ENCODE measurements at regions of chr16 and their contacts with region 1.

Region 1: GRCh38 chr16:55465077-55465896 is 13.7 kb upstream of the MMP2 start:
- DNase-seq: peak; percentile 79
- ATAC-seq: peak; percentile 97
- H3K4me3 ChIP-seq: no peak overlapping the region
- H3K27ac ChIP-seq: no peak overlapping the region
- H3K4me1 ChIP-seq: peaks cover under 1% of the 10 kb centered on the region; the same call in 1 of the 2 replicates
- H3K27me3 ChIP-seq: peaks cover 10% of the 10 kb centered on the region
- CTCF ChIP-seq: peak; percentile 100
- POLR2A ChIP-seq: peak; percentile 80
- RAD21 ChIP-seq: peak; percentile 100

Region 2: GRCh38 chr16:53892155-53892554 is 1573.1 kb before region 1 on chr16:
- CTCF ChIA-PET with region 1: no interaction called
- POLR2A ChIA-PET with region 1: no interaction called
- dilution Hi-C with region 1: no loop called
- in situ Hi-C with region 1: no loop called
- intact Hi-C with region 1: loop called (anchors 5 kb)
- DNase-seq: peak; percentile 81
- ATAC-seq: peak; percentile 78
- H3K4me3 ChIP-seq: no peak overlapping the region
- H3K27ac ChIP-seq: no peak overlapping the region
- H3K4me1 ChIP-seq: peaks cover 4% of the 10 kb centered on the region
- H3K27me3 ChIP-seq: no peaks in the 10 kb centered on the region
- CTCF ChIP-seq: peak; percentile 85
- POLR2A ChIP-seq: no peak
- RAD21 ChIP-seq: peak; percentile 83

Region 3: DNA sequence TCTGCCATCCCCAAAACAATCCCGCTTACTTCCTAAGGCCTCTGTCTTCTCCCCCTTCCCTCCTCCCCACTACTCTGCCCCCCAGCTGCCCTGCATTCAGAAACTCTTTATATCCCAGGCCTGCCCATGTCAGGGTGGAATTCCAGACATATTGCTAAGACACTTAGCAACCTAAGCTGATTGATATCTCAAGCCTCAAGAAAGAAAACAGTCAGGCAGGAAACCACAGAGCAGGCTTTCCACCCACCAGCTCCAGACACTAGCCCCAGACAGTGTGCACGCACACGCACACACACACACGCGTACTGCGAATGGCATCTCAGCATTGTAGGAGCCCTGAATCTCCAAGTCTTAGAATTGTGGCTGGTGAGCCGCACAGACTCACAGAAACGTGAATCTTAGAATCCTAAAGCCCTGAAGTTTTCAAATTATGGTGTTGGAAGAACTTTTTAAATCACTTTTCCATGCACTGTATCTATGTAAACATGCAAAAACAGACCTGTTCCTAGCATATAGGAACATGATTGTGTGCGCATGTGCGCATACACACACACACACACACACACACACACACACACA is 34.8 kb after region 1 on chr16:
- CTCF ChIA-PET with region 1: interaction called, 11 read pairs
- POLR2A ChIA-PET with region 1: no interaction called
- dilution Hi-C with region 1: no loop called
- in situ Hi-C with region 1: no loop called
- intact Hi-C with region 1: loop called (anchors 2 kb)
- DNase-seq: peak; percentile 99
- ATAC-seq: peak; percentile 77
- H3K4me3 ChIP-seq: no peak overlapping the region
- H3K27ac ChIP-seq: peak overlapping the region; percentile 83
- H3K4me1 ChIP-seq: peaks cover 34% of the 10 kb centered on the region
- H3K27me3 ChIP-seq: no peaks in the 10 kb centered on the region
- CTCF ChIP-seq: no peak
- POLR2A ChIP-seq: peak; percentile 58; the same call in 1 of the 2 replicates
- RAD21 ChIP-seq: no peak

Region 4: DNA sequence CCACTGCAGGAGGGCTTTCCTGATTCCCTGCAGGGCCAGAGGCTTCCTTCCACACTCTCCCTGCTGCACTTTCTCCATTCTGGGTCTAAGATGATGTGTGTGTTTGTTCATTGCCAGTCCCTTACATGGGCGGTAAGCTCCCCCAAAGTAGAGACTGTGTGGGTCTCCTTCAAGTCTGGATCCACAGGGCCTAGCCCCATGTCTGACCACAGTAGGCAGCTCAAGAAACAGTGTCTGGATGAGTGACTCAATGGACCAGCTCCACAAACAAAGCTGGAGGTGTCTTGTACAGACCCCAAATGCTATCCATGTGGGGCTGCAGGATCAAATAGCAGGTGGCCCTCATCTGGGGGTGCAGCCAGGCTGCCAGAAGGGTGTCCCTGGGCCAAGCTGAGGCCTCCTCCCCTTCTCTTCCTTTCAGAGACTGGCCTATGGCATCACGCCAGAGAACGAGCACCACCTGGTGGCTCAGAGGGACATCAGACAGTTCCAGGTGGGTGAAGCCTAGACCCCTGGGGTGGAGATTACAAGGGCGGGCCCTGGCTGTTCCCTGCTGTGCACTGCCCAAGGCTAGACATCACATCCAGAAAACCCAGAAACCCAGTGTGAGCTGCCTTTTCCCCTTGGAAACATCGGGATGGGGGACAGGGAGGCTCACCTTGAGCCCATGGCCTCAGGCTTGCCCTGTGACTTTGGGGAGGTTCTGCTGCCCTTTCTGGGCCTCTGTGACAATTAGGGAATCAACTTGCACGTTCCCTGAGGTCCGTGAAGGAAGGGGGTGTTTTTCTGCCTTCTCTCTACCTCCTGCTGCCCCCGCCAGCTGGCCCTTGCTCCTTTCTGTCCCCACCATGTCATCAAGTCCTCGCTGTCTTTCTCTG is 236.4 kb after region 1 on chr16:
- CTCF ChIA-PET with region 1: interaction called, 25 read pairs
- POLR2A ChIA-PET with region 1: no interaction called
- dilution Hi-C with region 1: no loop called
- in situ Hi-C with region 1: loop called (anchors 5 kb)
- intact Hi-C with region 1: loop called (anchors 1 kb)
- DNase-seq: peak; percentile 26
- ATAC-seq: peak; percentile 72
- H3K4me3 ChIP-seq: no peak overlapping the region
- H3K27ac ChIP-seq: no peak overlapping the region
- H3K4me1 ChIP-seq: no peaks in the 10 kb centered on the region
- H3K27me3 ChIP-seq: peaks cover 30% of the 10 kb centered on the region
- CTCF ChIP-seq: peak; percentile 48
- POLR2A ChIP-seq: no peak
- RAD21 ChIP-seq: peak; percentile 44

Region 5: DNA sequence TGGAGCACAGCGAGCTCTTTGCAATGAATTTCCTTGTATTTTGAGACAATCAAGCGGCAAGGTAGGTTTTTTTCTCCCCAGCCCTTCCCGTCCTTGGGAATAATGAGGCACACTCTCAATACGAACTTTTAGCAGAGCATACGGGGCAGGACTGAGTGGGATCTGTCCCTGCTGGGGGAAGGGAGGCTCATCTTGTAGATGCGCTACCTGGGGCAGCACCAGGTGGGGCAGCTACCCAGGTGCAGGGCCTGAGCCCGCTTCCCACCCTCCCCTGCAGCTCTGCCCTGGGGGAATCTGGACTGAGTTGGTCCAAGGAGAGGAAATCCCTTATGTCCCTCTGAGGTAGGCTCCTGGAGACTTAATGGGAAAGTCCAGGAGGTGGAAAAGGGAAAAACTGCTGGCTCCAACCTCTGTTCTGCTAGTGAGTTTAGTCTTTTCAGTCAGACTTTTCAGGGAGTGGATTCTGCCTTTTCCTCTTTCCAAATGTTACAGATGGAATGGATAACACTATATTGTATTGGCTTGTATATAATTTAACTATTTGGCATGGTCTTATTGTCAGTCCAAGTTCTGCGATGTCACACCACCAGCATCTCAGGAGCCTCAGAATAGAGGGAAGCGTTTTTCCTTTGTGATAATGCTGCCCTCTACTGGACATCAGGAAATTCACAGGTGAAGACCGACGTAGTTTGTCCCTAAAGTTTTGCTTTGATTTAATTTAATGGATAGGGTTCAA is 377.2 kb after region 1 on chr16:
- CTCF ChIA-PET with region 1: interaction called, 3 read pairs
- POLR2A ChIA-PET with region 1: no interaction called
- dilution Hi-C with region 1: no loop called
- in situ Hi-C with region 1: loop called (anchors 10 kb)
- intact Hi-C with region 1: loop called (anchors 1 kb)
- DNase-seq: peak; percentile 45
- ATAC-seq: peak; percentile 80; the same call in 1 of the 2 replicates
- H3K4me3 ChIP-seq: no peak overlapping the region
- H3K27ac ChIP-seq: no peak overlapping the region
- H3K4me1 ChIP-seq: no peaks in the 10 kb centered on the region
- H3K27me3 ChIP-seq: no peaks in the 10 kb centered on the region
- CTCF ChIP-seq: peak; percentile 71
- POLR2A ChIP-seq: no peak
- RAD21 ChIP-seq: peak; percentile 73

Measured in IMR-90 (cell line).